IMR-90 (cell line): ENCODE measurements at regions of chr2 and their contacts with region 1.

Region 1: DNA sequence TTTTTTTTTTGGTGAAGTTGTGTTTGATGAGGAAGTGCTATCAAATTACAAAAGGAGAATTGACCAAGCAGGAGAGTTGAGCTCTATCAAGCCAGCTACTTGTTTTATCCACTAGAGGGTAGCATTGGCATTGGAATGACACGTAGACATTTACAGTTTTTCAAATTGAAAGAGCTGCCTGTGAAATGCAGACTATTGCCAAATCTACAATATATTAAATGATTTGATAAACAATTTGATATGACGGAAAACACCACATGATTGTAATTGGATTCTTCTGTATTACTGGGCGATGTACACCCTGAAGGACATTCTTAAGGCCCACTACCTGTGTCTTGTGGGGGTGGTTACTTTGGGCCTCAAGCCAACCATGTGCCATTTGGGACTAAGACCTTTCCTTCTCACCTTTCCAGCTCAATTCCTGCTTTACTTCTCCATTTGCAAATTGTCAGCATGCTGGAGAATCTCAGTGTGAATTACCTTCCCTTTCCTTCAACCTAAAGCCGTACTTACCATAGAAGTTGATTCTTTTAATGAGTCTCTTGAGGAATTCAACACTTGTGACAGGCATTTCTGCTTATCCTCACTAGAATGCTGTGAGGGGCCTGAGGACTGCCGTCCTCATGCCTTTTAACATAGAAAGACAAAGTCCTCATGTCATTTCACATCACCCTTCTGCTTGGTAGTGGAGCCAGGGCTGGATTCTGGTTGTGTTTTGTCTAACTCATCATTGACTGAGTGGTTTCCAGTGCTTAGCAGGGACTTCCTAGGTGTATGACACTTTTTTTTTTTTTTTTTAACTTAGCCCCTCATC is 134.8 kb upstream of the THUMPD2 start:
- DNase-seq: peak; percentile 88
- ATAC-seq: peak; percentile 85
- H3K4me3 ChIP-seq: no peak overlapping the region
- H3K27ac ChIP-seq: peak overlapping the region; percentile 94
- H3K4me1 ChIP-seq: peaks cover 5% of the 10 kb centered on the region
- H3K27me3 ChIP-seq: no peaks in the 10 kb centered on the region
- CTCF ChIP-seq: peak; percentile 90
- POLR2A ChIP-seq: 0 out of 2 replicates have a peak, but pooled peaks have one; percentile 37
- RAD21 ChIP-seq: peak; percentile 99

Region 2: DNA sequence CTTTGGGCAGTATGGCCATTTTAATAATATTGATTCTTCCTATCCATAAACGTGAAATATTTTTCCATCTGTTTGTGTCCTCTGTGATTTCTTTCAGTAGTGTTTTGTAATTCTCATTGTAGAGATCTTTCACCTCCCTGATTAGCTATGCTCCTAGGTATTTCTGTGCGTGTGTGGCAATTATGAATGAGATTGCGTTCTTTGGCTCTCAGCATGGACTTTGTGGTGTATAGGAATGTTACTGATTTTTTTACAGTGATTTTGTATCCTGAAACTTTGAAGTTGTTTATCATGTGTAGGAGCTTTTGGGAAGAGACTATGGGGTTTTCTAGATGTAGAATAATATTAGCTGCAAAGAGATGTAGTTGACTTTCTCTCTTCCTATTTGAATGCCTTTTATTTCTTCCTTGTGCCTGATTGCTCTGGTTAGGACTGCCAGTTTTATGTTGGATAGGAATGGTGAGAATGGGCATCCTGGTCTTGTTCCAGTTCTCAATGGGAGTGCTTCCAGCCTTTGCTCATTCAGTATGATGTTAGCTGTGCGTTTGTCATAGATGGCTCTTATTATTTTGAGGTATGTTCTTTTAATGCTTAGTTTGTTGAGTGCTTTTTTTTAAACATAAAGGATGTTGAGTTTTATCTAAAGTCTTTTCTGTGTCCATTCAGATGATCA is 107.8 kb before region 1 on chr2:
- CTCF ChIA-PET with region 1: no interaction called
- POLR2A ChIA-PET with region 1: no interaction called
- dilution Hi-C with region 1: no loop called
- in situ Hi-C with region 1: no loop called
- intact Hi-C with region 1: no loop called
- DNase-seq: peak; percentile 3
- ATAC-seq: no peak
- H3K4me3 ChIP-seq: no peak overlapping the region
- H3K27ac ChIP-seq: no peak overlapping the region
- H3K4me1 ChIP-seq: no peaks in the 10 kb centered on the region
- H3K27me3 ChIP-seq: no peaks in the 10 kb centered on the region
- CTCF ChIP-seq: no peak
- POLR2A ChIP-seq: no peak
- RAD21 ChIP-seq: no peak

Region 3: DNA sequence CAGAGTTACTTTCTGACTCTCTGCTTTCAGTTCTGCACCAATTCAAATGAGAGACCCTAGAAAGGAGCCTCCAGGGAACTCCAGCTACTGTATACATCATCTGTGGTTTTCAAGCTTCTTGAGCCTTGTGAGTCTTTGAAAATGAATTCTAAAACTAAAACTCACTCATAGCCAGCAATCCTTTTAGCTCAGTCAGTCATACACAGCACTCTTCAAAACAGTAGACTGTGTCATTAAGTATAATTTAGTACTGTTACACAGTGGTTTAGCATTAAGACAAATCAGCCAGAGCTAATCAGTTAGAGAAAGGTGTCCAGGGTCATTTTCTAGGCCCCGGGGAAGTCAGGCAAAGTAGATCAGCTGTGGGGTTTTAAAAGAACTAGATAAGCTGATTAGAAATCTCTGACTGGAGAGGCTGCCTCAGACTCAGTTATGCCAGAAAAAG is 187.3 kb after region 1 on chr2:
- CTCF ChIA-PET with region 1: interaction called, 6 read pairs
- POLR2A ChIA-PET with region 1: interaction called, 5 read pairs
- dilution Hi-C with region 1: no loop called
- in situ Hi-C with region 1: no loop called
- intact Hi-C with region 1: loop called (anchors 1 kb)
- DNase-seq: peak; percentile 92
- ATAC-seq: peak; percentile 65
- H3K4me3 ChIP-seq: no peak overlapping the region
- H3K27ac ChIP-seq: peak overlapping the region; percentile 98
- H3K4me1 ChIP-seq: peaks cover 28% of the 10 kb centered on the region
- H3K27me3 ChIP-seq: no peaks in the 10 kb centered on the region
- CTCF ChIP-seq: no peak
- POLR2A ChIP-seq: peak; percentile 53
- RAD21 ChIP-seq: peak; percentile 5; the same call in 1 of the 2 replicates

Region 4: DNA sequence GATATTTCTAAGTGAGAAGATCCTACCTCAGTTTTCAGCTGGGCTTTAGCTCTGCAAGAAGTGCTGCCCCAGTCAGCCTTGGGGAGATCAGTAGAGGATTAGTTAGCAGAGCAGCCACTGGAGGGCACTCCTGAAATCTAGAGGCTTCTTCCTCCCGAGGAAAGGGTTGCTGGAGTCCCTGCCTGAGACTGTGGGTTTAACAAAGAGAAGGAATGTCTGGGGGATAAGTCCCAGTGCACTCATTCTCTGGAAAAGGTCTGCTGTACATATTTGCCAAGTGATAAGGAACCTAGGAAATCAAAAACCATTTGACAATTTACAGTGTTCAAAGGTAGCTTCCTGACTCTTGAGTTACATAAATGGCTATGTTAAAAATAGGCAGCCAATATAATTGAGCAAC is 330.8 kb after region 1 on chr2:
- CTCF ChIA-PET with region 1: interaction called, 8 read pairs
- POLR2A ChIA-PET with region 1: no interaction called
- dilution Hi-C with region 1: no loop called
- in situ Hi-C with region 1: no loop called
- intact Hi-C with region 1: loop called (anchors 1 kb)
- DNase-seq: peak; percentile 75
- ATAC-seq: peak; percentile 59
- H3K4me3 ChIP-seq: no peak overlapping the region
- H3K27ac ChIP-seq: no peak overlapping the region
- H3K4me1 ChIP-seq: peaks cover 31% of the 10 kb centered on the region
- H3K27me3 ChIP-seq: no peaks in the 10 kb centered on the region
- CTCF ChIP-seq: peak; percentile 61
- POLR2A ChIP-seq: 0 out of 2 replicates have a peak, but pooled peaks have one; percentile 26
- RAD21 ChIP-seq: peak; percentile 67

Region 5: DNA sequence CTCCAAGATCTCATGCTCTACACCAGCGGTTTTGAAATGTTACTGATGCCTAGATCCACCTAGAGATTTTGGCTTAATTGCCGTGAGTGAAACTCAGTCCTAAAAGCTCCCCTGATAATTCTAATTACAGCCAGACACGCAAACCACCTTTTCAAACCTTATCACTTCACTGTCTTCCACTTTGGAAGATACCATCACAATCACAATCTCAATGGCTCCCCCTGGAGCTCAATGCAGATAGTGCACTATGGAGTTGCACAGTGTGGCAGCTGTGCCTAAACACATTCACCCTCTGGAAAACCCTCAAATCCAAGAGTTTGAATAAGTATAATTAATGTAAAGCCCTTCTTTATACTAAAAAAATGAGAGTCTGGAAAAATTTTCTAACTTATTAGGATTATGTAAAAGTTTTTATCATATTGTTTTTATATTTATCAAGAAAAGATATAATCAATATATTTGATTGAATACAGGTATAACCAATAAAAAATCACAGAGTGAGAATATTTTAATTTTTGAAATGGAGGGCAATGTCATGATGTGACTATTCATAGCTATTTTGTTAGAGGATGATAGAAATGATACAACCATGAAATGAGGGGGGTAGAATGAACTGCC is 640.9 kb after region 1 on chr2:
- CTCF ChIA-PET with region 1: no interaction called
- POLR2A ChIA-PET with region 1: no interaction called
- dilution Hi-C with region 1: no loop called
- in situ Hi-C with region 1: no loop called
- intact Hi-C with region 1: loop called (anchors 1 kb)
- DNase-seq: peak; percentile 38
- ATAC-seq: peak; percentile 63; the same call in 1 of the 2 replicates
- H3K4me3 ChIP-seq: no peak overlapping the region
- H3K27ac ChIP-seq: no peak overlapping the region
- H3K4me1 ChIP-seq: peaks cover 8% of the 10 kb centered on the region
- H3K27me3 ChIP-seq: no peaks in the 10 kb centered on the region
- CTCF ChIP-seq: peak; percentile 64
- POLR2A ChIP-seq: no peak
- RAD21 ChIP-seq: peak; percentile 64

Region 6: DNA sequence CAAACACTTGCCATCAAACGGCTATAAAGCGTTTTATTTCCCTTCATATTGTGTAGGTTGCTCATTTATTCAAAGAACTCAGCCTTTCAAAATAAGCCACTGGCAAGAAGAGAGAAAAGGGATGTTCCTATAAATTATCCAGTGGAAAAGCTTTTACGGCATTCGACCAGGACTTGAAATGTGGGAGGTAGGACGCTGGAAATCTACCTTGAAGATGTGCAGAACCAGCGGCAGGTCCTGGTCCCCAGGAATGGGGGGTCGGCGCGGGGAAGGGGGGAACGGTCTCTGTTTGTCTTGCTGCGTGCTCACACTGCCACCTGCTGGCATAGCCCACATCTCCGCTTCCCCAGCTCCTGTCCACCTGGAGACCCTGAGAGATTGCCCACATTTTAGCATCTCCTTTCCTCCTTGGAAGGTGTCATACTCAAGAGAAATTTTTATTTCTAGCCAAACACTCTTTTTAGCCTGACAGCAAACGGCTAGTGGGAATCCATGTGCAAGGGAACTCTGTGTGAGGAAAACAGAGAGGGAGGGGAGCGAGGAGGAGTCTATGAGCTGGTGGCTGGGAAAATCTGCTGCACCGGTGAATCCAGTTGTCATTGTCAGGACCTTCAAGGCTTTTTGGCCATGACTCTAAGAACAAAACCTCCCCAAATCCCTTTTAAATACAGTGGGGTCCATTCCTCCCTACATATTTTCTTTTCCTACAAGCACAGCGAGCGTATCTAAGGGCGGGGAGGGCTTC is 1785.0 kb after region 1 on chr2:
- CTCF ChIA-PET with region 1: interaction called, 3 read pairs
- POLR2A ChIA-PET with region 1: no interaction called
- dilution Hi-C with region 1: no loop called
- in situ Hi-C with region 1: loop called (anchors 25 kb)
- intact Hi-C with region 1: loop called (anchors 2 kb)
- DNase-seq: no peak
- ATAC-seq: peak; percentile 59; the same call in 1 of the 2 replicates
- H3K4me3 ChIP-seq: no peak overlapping the region
- H3K27ac ChIP-seq: no peak overlapping the region
- H3K4me1 ChIP-seq: no peaks in the 10 kb centered on the region
- H3K27me3 ChIP-seq: peaks cover 6% of the 10 kb centered on the region; the same call in 1 of the 2 replicates
- CTCF ChIP-seq: peak; percentile 45
- POLR2A ChIP-seq: no peak
- RAD21 ChIP-seq: peak; percentile 50

Region 7: DNA sequence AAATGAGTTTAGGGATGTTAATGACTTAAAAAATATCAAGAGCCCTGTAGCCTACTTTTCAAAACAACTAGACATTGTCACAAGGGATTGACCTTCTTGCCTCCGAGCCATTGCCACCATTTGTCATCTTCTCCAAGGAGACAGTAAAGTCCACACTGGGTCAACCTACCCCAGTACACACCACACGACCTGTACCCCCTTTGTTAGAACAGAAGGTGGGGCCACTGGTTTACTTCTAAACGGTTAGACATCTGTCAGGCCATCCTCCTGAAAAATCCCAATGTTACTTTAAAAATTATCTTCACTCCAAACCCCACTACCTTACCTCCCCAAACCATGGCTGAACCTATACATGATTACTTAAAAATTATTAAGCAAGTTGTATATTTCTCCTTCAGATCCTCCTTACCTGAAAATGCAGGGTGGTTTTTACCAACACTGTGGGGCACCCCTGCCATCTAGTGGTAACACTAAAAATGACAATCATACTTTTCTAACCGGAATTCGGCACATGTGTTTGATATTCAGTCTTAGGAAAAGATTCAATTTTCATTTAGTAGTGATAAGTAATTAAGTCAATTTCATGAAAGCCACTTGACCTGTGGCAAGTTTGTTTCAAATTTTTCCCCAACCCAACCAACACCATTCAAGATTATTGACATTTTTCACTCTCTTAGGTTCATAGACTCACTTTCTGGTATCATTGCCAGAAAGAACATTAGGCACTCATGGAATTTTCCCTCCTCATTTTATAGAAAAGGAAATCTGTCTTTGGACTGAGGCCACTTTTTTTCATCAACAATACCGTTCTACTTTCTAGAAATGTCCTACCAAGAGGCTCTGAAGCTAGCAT is 1868.7 kb after region 1 on chr2:
- CTCF ChIA-PET with region 1: no interaction called
- POLR2A ChIA-PET with region 1: no interaction called
- dilution Hi-C with region 1: no loop called
- in situ Hi-C with region 1: loop called (anchors 10 kb)
- intact Hi-C with region 1: loop called (anchors 1 kb)
- DNase-seq: peak; percentile 30
- ATAC-seq: peak; percentile 74
- H3K4me3 ChIP-seq: no peak overlapping the region
- H3K27ac ChIP-seq: no peak overlapping the region
- H3K4me1 ChIP-seq: no peaks in the 10 kb centered on the region
- H3K27me3 ChIP-seq: peaks cover 6% of the 10 kb centered on the region
- CTCF ChIP-seq: peak; percentile 73
- POLR2A ChIP-seq: no peak
- RAD21 ChIP-seq: peak; percentile 84